Esophagus muscularis mucosa (tissue), 4 donors: ENCODE measurements at regions of chr7 and their contacts with region 1.

Region 1: DNA sequence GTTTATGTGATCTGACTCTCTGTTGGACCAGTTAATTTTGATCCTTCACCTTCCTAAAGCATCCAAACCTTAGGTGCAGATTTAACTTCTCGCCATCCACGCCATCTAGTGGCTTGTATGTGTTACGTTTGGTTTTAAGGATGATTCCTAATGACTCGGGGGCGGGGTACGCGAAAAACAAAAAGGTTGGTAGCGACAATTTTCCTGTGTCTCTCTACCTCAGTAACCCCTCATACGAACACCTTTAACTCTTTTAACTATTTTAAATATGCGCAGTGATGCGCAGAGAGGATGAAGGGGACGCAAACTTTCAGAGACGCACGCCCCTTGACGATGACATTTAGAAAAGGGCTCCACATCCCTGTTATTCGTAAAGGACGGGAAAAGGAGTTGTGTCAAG is 714 bp upstream of the KCND2 start:
- DNase-seq: no peak
- H3K4me3 ChIP-seq: peak overlapping the region; percentile 50 to 62 (median 50)
- H3K27ac ChIP-seq: peak overlapping the region in 1 of 4 donors; percentile 31
- H3K4me1 ChIP-seq: peaks cover 5 to 16% (median 11%) of the 10 kb centered on the region in 4 donors
- H3K27me3 ChIP-seq: peaks cover 0 to 44% (median 0%) of the 10 kb centered on the region in 4 donors
- CTCF ChIP-seq: peak; percentile 21 to 57 (median 37)
- EP300 ChIP-seq: no peak
- POLR2A ChIP-seq: no peak

Region 2: GRCh38 chr7:119737390-119737789 is 534.9 kb before region 1 on chr7:
- intact Hi-C with region 1: no loop called
- DNase-seq: no peak
- H3K4me3 ChIP-seq: no peak overlapping the region
- H3K27ac ChIP-seq: no peak overlapping the region
- H3K4me1 ChIP-seq: no peaks in the 10 kb centered on the region
- H3K27me3 ChIP-seq: no peaks in the 10 kb centered on the region
- CTCF ChIP-seq: no peak
- EP300 ChIP-seq: no peak
- POLR2A ChIP-seq: no peak

Region 3: DNA sequence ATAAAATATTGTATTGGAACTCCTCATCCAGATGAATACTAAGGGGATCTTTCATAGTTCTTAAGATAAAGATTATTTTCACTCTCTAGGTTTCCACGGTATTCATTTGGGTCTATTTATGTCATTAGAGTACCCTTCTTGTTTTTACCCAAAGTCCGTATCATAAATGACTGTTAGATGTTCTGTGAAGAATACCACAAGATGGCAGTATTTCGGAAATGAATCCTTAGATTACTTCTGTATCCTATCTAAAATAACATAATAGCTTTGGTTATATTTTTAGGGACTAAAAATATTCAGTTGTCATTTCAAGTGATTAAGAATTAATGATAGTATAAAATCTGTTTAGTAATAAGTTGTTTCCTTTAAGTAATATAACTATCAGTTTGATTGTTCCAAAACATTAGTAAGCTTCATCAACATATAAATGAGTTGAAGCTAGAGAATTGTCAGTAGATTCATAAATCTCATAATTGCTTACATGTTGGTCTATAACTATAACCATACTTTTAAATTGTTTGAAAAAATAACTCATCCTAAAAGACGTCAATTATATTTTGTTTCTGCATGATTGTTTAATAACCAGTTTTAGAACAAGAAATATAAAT is 336.7 kb before region 1 on chr7:
- intact Hi-C with region 1: loop called (anchors 2 kb)
- DNase-seq: no peak
- H3K4me3 ChIP-seq: no peak overlapping the region
- H3K27ac ChIP-seq: no peak overlapping the region
- H3K4me1 ChIP-seq: no peaks in the 10 kb centered on the region
- H3K27me3 ChIP-seq: no peaks in the 10 kb centered on the region
- CTCF ChIP-seq: peak; percentile 13 to 36 (median 29)
- EP300 ChIP-seq: no peak
- POLR2A ChIP-seq: no peak

Region 4: DNA sequence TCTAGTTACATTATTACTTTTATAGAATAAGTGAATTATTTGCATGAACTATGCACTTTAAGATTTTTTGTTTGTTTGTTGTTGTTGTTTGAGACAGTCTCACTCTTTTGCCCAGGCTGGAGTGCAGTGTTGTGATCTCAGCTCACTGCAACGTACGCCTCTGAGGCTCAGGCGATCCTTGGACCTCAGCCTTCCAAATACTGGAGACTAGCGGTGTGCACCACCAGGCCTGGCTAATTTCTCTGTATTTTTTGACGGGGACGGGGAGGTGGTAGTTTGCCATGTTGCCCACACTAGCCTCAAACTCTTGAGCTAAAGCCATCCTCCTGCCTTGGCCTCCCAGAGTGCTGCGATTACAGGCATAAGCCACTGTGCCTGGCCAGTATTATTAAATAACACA is 29.9 kb after region 1 on chr7:
- intact Hi-C with region 1: no loop called
- DNase-seq: no peak
- H3K4me3 ChIP-seq: no peak overlapping the region
- H3K27ac ChIP-seq: no peak overlapping the region
- H3K4me1 ChIP-seq: no peaks in the 10 kb centered on the region
- H3K27me3 ChIP-seq: no peaks in the 10 kb centered on the region
- CTCF ChIP-seq: no peak
- EP300 ChIP-seq: no peak
- POLR2A ChIP-seq: no peak